ENCODE measurements at regions of chr15 and their contacts with region 1.

Region 1: DNA sequence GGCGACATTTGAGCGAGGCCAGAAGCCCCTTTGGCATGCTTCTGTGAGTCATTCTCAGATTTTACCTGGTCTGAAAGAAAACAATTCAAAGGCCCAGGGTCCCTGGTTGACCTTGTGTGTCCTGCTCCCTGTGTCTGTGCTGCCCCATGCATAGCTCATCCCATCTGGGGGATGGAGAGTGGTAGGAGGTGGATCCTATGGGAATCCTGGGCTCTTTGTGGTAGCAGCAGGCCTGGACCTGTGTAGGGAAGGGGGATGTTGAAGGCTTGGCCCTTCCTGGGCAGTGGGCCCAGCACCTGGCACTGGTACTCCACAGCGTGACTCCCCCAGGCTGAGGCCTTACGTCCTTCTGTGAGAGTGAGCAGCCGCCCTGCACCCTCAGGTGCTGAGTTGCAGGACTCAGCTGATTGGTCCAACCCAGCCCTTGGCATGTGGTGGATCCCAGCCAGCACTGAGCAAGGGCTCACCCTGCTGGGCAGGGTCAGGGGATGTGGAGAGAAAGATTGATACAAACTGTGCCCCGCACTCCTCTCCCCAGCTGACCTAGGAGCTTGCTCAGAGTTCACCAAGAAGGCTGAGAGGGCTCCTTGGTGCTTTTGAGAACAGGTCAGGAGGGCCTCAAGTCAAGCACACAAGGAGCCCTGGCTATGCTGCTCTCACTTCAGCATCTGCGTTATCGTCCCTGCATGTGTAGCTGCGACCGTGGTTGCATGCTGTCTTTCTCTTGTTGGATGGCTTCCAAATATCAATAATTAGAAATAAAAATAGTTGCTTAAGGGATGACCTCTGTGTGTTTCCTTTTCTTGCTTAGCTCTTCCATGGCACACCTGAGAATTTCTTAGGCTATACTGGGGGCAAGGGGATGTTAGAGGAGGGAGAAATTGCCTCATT is 21.4 kb upstream of the JMJD7 start:
- DNase-seq: peak in 1 of 2 experiments; percentile 46
- H3K4me3 ChIP-seq: no peak overlapping the region
- H3K4me3 Mint-ChIP-seq: no peak overlapping the region
- H3K27ac Mint-ChIP-seq: no peak overlapping the region
- H3K4me1 ChIP-seq: no peaks in the 10 kb centered on the region
- H3K4me1 Mint-ChIP-seq: no peaks in the 10 kb centered on the region
- H3K27me3 ChIP-seq: no peaks in the 10 kb centered on the region
- H3K27me3 Mint-ChIP-seq: no peaks in the 10 kb centered on the region
- CTCF ChIP-seq: no peak

Region 2: DNA sequence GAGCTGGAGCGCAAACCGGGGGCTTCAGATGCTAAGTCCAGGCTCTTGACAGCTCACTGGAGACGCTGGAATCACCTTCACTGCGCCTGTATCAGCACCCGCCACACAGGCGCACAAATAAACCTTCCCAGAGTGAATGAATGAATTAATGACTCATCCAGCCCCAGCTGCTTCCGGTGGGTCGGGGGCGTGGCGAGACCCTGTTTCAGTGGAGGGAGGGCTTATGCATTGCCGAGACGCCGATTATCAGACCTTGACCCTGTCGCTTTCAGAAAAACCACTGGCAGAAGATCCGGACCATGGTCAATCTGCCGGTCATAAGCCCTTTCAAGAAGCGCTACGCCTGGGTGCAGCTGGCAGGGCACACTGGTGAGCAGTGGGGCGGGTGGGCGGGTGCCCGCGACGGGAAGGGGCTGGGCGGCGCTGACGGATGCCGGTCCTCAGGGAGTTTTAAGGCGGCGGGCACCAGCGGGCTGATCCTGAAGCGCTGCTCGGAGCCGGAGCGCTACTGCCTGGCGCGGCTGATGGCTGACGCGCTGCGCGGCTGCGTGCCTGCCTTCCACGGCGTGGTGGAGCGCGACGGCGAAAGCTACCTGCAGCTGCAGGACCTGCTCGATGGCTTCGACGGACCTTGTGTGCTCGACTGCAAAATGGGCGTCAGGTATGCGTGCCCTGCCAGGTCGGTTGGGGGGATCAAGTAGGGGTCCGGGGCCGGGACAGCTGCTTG is 305.2 kb before region 1 on chr15:
- CTCF ChIA-PET with region 1: no interaction called
- POLR2A ChIA-PET with region 1: no interaction called
- intact Hi-C with region 1: no loop called
- DNase-seq: no peak
- H3K4me3 ChIP-seq: no peak overlapping the region
- H3K4me3 Mint-ChIP-seq: no peak overlapping the region
- H3K27ac Mint-ChIP-seq: no peak overlapping the region
- H3K4me1 ChIP-seq: peaks cover 6% of the 10 kb centered on the region; the same call in 1 of the 2 replicates
- H3K4me1 Mint-ChIP-seq: no peaks in the 10 kb centered on the region
- H3K27me3 ChIP-seq: no peaks in the 10 kb centered on the region
- H3K27me3 Mint-ChIP-seq: no peaks in the 10 kb centered on the region
- CTCF ChIP-seq: no peak

Region 3: GRCh38 chr15:41749526-41749925 is 57.0 kb before region 1 on chr15:
- CTCF ChIA-PET with region 1: no interaction called
- POLR2A ChIA-PET with region 1: no interaction called
- intact Hi-C with region 1: loop called (anchors 2 kb)
- DNase-seq: no peak
- H3K4me3 ChIP-seq: no peak overlapping the region
- H3K4me3 Mint-ChIP-seq: no peak overlapping the region
- H3K27ac Mint-ChIP-seq: no peak overlapping the region
- H3K4me1 ChIP-seq: no peaks in the 10 kb centered on the region
- H3K4me1 Mint-ChIP-seq: no peaks in the 10 kb centered on the region
- H3K27me3 ChIP-seq: no peaks in the 10 kb centered on the region
- H3K27me3 Mint-ChIP-seq: no peaks in the 10 kb centered on the region
- CTCF ChIP-seq: no peak

Measured in Caco-2 (cell line).